Stomach (tissue), 19 donors: ENCODE measurements at regions of chr5 and their contacts with region 1.

Region 1: DNA sequence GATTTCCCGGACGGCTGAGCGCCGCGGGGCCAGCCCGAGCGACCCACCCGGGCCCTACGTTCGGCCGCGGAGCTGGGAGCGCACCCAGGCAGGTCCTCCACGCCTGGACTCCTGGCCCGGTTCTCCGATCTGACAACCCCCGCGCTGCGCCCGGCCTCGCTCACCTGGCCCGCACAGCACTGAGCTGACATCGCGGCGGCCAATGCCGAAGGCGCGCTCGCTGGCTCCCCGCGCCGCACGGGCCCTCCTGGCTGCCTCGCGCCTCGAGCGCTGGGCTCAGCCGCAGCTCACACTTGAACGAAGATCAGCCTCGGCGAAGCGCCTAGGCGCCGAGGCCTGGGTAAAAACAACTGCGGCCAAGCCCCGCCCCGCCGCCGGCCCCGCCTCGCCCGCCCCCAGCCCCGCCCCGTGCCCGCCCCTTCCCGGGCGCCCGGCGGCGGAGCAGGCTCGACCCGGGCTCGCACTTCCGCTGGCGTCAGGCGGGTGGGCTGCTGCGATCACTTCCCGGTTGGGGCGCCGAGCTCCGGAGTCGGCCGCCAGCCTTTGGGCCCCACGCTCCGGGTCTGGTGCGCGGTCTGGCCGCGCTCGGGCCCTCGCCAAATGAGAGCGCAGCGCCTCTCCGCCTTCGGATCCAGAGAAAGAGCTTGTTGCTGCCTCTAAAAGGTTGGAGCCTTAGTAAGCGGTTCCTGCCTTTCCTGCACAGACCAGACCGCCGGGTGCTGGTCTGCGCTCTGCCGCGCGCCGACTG is at the start of gene SERINC5:
- DNase-seq: peak; percentile 85 to 96
- H3K4me3 ChIP-seq: peak within 1 kb of the TSS; percentile 71 to 91 (median 86)
- H3K27ac ChIP-seq: peak within 1 kb of the TSS; percentile 91 to 99 (median 98)
- H3K4me1 ChIP-seq: peaks cover 28 to 55% (median 40%) of the 10 kb centered on the region in 4 donors
- H3K27me3 ChIP-seq: no peaks in the 10 kb centered on the region
- CTCF ChIP-seq: no peak
- EP300 ChIP-seq: no peak
- POLR2A ChIP-seq: peak in 2 of 4 donors; percentile 60 to 83
- total RNA-seq, gene SERINC5: 16.9 to 71.4 (median 34.3) TPM

Region 2: GRCh38 chr5:79736528-79737514 is 519.1 kb before region 1 on chr5:
- intact Hi-C with region 1: no loop called
- DNase-seq: peak in 1 of 2 donors; percentile 11
- H3K4me3 ChIP-seq: no peak overlapping the region
- H3K27ac ChIP-seq: no peak overlapping the region
- H3K4me1 ChIP-seq: no peaks in the 10 kb centered on the region
- H3K27me3 ChIP-seq: no peaks in the 10 kb centered on the region
- CTCF ChIP-seq: no peak
- EP300 ChIP-seq: no peak
- POLR2A ChIP-seq: no peak

Region 3: DNA sequence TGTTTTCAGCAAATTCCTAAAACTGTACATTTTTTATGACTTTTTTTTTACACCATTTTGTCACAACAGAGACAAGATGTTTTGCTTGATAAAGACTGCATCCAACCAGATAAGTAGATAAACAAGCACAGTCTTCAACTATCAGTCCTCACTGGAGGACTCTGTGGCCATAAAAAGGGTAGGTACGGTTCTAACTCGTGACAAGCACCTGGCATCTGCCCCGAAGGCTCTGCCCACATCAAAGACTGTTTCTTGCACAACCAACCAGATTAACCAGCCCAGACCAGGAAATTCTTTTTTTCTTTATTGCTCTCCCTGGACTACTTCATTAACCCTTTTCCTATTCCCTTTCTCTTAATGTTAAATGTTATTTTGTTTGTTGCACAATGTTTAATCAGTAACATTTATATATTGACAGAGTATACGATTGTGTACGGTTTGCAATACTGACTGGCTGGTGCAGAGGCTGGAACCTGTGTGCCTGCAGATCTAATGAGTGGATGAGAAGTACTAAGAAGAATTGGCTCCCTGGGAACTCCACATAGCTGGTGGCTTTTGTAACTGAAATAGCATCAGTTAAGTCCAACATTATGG is 74.2 kb before region 1 on chr5:
- intact Hi-C with region 1: loop called (anchors 10 kb)
- DNase-seq: peak; percentile 88 to 91
- H3K4me3 ChIP-seq: no peak overlapping the region
- H3K27ac ChIP-seq: peak overlapping the region; percentile 48 to 81 (median 79)
- H3K4me1 ChIP-seq: peaks cover 39 to 70% (median 54%) of the 10 kb centered on the region in 4 donors
- H3K27me3 ChIP-seq: no peaks in the 10 kb centered on the region
- CTCF ChIP-seq: no peak
- EP300 ChIP-seq: no peak
- POLR2A ChIP-seq: no peak